ENCODE measurements at regions of chr17 and their contacts with region 1.

Region 1: GRCh38 chr17:2883567-2884101 is 87.4 kb downstream of the RAP1GAP2 start:
- DNase-seq: no peak
- ATAC-seq: peak in 2 of 3 donors; percentile 59 to 60
- H3K4me3 ChIP-seq: no peak overlapping the region
- H3K4me3 Mint-ChIP-seq: peak overlapping the region; percentile 52
- H3K27ac ChIP-seq: no peak overlapping the region
- H3K27ac Mint-ChIP-seq: peak overlapping the region; percentile 78
- H3K4me1 ChIP-seq: peaks cover 42% of the 10 kb centered on the region
- H3K4me1 Mint-ChIP-seq: peaks cover 54 to 75% of the 10 kb centered on the region in 2 donors
- H3K27me3 ChIP-seq: no peaks in the 10 kb centered on the region
- H3K27me3 Mint-ChIP-seq: no peaks in the 10 kb centered on the region
- CTCF ChIP-seq: no peak

Region 2: GRCh38 chr17:2929881-2930533 is 46.4 kb after region 1 on chr17:
- intact Hi-C with region 1: loop called (anchors 10 kb)
- DNase-seq: peak in 1 of 2 donors; percentile 48
- ATAC-seq: peak in 1 of 3 donors; percentile 58
- H3K4me3 ChIP-seq: no peak overlapping the region
- H3K4me3 Mint-ChIP-seq: no peak overlapping the region
- H3K27ac ChIP-seq: no peak overlapping the region
- H3K27ac Mint-ChIP-seq: peak overlapping the region; percentile 77 to 79
- H3K4me1 ChIP-seq: peaks cover 45% of the 10 kb centered on the region
- H3K4me1 Mint-ChIP-seq: peaks cover 58 to 82% of the 10 kb centered on the region in 2 donors
- H3K27me3 ChIP-seq: no peaks in the 10 kb centered on the region
- H3K27me3 Mint-ChIP-seq: no peaks in the 10 kb centered on the region
- CTCF ChIP-seq: peak; percentile 58

Region 3: GRCh38 chr17:2965563-2966235 is 82.1 kb after region 1 on chr17:
- intact Hi-C with region 1: no loop called
- DNase-seq: no peak
- ATAC-seq: no peak
- H3K4me3 ChIP-seq: no peak overlapping the region
- H3K4me3 Mint-ChIP-seq: no peak overlapping the region
- H3K27ac ChIP-seq: no peak overlapping the region
- H3K27ac Mint-ChIP-seq: peak overlapping the region; percentile 32 to 70
- H3K4me1 ChIP-seq: no peaks in the 10 kb centered on the region
- H3K4me1 Mint-ChIP-seq: peaks cover 0 to 21% of the 10 kb centered on the region in 2 donors
- H3K27me3 ChIP-seq: no peaks in the 10 kb centered on the region
- H3K27me3 Mint-ChIP-seq: no peaks in the 10 kb centered on the region
- CTCF ChIP-seq: no peak

Measured in natural killer cell (primary cell).